Panc1 (cell line): ENCODE measurements at regions of chr19 and their contacts with region 1.

Region 1: GRCh38 chr19:49391581-49392399 is 3.7 kb downstream of the KASH5 start:
- DNase-seq: peak; percentile 30
- ATAC-seq: peak; percentile 95
- H3K4me3 ChIP-seq: 0 out of 4 replicates have a peak overlapping the region, but pooled peaks of 1 of the 2 experiments have one; percentile 8
- H3K27ac ChIP-seq: no peak overlapping the region
- H3K4me1 ChIP-seq: no peaks in the 10 kb centered on the region
- H3K27me3 ChIP-seq: no peaks in the 10 kb centered on the region
- CTCF ChIP-seq: peak; percentile 89

Region 2: DNA sequence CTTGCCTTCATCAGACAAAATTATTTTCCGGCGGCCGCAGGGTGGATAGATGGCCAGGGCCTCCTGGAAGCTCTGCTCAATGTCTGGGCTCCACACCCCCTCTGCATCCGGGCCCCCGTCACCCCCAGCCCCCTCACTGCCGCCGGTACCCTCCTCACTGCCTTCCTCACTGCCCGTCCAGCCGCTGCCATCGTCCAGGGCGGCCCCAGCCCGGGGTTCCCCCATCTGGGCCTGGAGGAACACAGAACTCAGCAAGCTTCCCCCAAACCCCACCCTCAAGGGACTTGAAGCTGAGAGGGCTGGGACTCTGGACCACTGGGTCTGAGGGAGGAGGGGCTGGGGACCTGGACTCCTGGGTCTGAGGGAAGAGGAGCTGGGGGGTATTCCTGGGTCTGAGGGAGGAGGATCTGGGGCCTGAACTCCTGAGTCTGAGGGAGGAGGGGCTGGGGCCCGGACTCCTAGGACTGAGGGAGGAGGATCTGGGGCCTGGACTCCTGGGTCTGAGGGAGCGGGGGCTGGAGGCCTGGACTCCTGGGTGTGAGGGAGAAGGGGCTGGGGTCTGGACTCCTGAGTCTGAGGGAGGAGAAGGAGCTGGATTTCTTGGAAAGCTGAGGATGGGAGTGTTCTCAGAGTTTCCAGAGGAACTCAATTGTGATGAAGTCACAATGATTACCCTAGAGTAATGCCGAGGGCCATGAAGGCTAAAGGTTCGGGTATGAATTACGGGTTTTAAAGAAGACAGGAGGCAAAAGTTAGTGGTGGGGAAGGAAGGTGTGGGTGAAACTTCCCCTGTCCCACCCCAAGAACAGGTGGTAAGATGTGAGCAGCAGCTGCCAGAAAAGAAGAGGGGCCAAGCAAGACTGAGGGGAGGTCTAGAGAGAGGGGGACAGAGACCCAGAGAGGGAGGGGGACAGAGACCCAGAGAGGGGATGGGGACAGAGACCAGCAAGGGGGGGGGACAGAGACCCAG is 31.7 kb before region 1 on chr19:
- CTCF ChIA-PET with region 1: interaction called, 18 read pairs
- POLR2A ChIA-PET with region 1: no interaction called
- in situ Hi-C with region 1: no loop called
- intact Hi-C with region 1: no loop called
- DNase-seq: no peak
- ATAC-seq: no peak
- H3K4me3 ChIP-seq: no peak overlapping the region; a peak in 1 of 4 replicates
- H3K27ac ChIP-seq: no peak overlapping the region; the same call in 1 of the 2 replicates
- H3K4me1 ChIP-seq: no peaks in the 10 kb centered on the region; the same call in 1 of the 2 replicates
- H3K27me3 ChIP-seq: no peaks in the 10 kb centered on the region
- CTCF ChIP-seq: no peak

Region 3: DNA sequence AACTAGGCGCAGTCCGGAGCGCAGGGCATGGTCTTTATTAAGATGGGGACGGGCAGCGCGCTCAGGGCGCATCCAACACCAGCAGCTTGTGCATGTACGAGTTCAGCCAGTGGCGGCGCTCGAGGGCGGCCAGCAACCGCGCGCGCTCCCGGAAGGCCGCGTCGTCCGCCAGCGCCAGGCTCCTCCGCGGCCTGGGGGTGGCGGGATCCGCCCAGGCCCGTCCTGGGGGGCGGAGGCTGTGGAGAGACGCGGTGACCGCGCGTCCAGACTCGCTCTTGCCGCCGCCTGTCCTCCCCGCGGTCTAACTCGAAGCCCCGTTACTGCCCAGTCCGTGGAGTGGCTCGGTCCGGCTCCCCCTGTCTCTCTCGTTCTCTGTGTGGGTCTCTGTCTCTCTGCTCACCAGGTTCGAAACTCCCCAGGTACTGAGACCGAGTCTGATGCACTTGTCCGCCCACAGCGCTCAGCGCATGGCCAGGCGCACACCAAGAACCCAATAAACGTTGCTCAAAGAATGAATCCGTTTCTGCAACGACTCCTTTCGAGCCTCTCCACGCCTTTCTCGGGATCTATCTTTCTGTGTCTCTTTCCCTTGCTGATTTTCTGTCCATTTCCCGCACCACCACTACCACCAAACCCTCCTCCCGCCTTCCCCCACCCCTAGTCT is 30.7 kb after region 1 on chr19:
- CTCF ChIA-PET with region 1: no interaction called
- POLR2A ChIA-PET with region 1: no interaction called
- in situ Hi-C with region 1: no loop called
- intact Hi-C with region 1: no loop called
- DNase-seq: no peak
- ATAC-seq: peak; percentile 64
- H3K4me3 ChIP-seq: peak overlapping the region; percentile 20 to 35
- H3K27ac ChIP-seq: no peak overlapping the region
- H3K4me1 ChIP-seq: peaks cover 3% of the 10 kb centered on the region; the same call in 1 of the 2 replicates
- H3K27me3 ChIP-seq: peaks cover 10% of the 10 kb centered on the region
- CTCF ChIP-seq: peak; percentile 77

Region 4: GRCh38 chr19:49443366-49444099 is 51.7 kb after region 1 on chr19:
- CTCF ChIA-PET with region 1: interaction called, 3 read pairs
- POLR2A ChIA-PET with region 1: no interaction called
- in situ Hi-C with region 1: no loop called
- intact Hi-C with region 1: loop called (anchors 5 kb)
- DNase-seq: no peak
- ATAC-seq: peak; percentile 89
- H3K4me3 ChIP-seq: peak overlapping the region; percentile 61 to 63
- H3K27ac ChIP-seq: no peak overlapping the region
- H3K4me1 ChIP-seq: no peaks in the 10 kb centered on the region; the same call in 1 of the 2 replicates
- H3K27me3 ChIP-seq: peaks cover 9% of the 10 kb centered on the region; the same call in 1 of the 2 replicates
- CTCF ChIP-seq: peak; percentile 94

Region 5: DNA sequence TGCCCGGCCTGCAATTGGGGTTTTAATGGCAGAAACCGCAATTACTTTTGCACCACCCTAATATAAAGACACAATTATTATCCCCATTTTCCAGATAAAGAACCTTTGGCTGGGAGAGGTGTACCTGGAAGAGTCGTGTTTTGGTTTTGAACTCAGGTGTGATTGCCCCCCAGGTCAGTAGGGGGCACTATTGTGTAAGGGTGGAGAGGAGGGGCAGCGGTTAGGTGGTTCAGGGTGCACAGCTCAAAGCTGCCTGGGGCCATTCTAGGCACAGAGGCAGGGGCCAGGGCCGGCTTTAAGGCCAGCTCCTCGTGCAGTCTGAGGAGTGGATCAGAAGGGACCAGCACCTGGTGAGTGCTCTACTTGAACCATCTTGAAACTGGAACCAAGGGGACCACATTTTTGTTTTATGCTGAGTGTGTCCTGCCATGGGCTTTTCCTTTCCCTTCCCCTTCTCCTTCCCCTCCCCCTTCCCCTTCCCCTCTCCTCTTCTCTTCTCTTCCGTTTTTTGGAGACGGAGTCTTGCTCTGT is 114.8 kb after region 1 on chr19:
- CTCF ChIA-PET with region 1: no interaction called
- POLR2A ChIA-PET with region 1: no interaction called
- in situ Hi-C with region 1: no loop called
- intact Hi-C with region 1: no loop called
- DNase-seq: no peak
- ATAC-seq: peak; percentile 60; the same call in 1 of the 2 replicates
- H3K4me3 ChIP-seq: no peak overlapping the region
- H3K27ac ChIP-seq: no peak overlapping the region
- H3K4me1 ChIP-seq: no peaks in the 10 kb centered on the region
- H3K27me3 ChIP-seq: no peaks in the 10 kb centered on the region
- CTCF ChIP-seq: peak; percentile 87